ENCODE measurements at regions of chr10 and their contacts with region 1.

Region 1: GRCh38 chr10:102399217-102400089 is 3.9 kb downstream of the NFKB2 start:
- DNase-seq: peak; percentile 82 to 90
- H3K4me3 ChIP-seq: peak overlapping the region; percentile 55 to 71 (median 67)
- H3K27ac ChIP-seq: peak overlapping the region; percentile 91 to 95
- H3K4me1 ChIP-seq: peaks cover 4 to 11% of the 10 kb centered on the region in 2 donors
- H3K27me3 ChIP-seq: no peaks in the 10 kb centered on the region
- CTCF ChIP-seq: peak; percentile 91 to 93 (median 93)
- POLR2A ChIP-seq: no peak

Region 2: GRCh38 chr10:102151774-102152544 is 247.5 kb before region 1 on chr10 and contains the start of gene NOLC1:
- intact Hi-C with region 1: loop called (anchors 10 kb)
- DNase-seq: peak; percentile 99
- H3K4me3 ChIP-seq: peak within 1 kb of the TSS; percentile 78 to 88 (median 85)
- H3K27ac ChIP-seq: peak within 1 kb of the TSS; percentile 95 to 96
- H3K4me1 ChIP-seq: no peaks in the 10 kb centered on the region
- H3K27me3 ChIP-seq: no peaks in the 10 kb centered on the region
- CTCF ChIP-seq: no peak
- POLR2A ChIP-seq: peak; percentile 64
- total RNA-seq, gene NOLC1: 40.5 to 82.8 (median 65.5) TPM

Measured in breast epithelium (tissue), 4 donors.